IMR-90 (cell line): ENCODE measurements at regions of chr1 and their contacts with region 1.

Region 1: DNA sequence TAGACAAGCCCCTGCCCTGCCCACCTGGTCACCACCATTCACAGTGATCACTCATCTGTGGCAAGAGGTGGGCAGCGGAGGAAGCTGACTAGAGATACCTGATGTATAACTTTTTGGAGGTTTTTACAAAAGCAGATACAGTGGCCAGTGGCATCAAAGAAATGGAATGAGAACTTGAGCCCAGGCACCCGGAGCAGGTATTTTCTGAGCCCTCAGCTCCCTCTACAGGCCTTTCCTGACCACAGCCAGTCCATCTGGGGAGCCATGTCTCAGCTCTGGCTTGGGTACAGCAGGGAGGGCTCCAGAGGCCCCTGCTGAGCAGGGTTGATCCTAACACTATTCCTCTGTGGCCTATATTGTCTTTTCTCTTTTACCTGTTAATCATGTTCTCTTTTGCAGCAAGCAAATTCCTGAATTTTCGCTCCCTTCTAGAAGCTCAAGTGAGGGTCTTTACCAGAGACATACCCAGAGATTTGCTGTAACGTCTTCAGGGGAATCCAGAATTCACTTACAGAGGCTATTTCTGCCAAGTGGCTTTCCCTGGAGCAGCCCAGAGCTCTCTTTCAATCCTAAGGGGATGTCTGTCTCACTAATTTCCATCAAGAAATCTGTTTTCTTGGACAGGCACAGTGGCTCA is 27.3 kb downstream of the GPR157 start:
- DNase-seq: peak; percentile 68
- ATAC-seq: peak; percentile 81
- H3K4me3 ChIP-seq: no peak overlapping the region
- H3K27ac ChIP-seq: no peak overlapping the region
- H3K4me1 ChIP-seq: peaks cover 3% of the 10 kb centered on the region
- H3K27me3 ChIP-seq: no peaks in the 10 kb centered on the region
- CTCF ChIP-seq: peak; percentile 81
- POLR2A ChIP-seq: no peak
- RAD21 ChIP-seq: peak; percentile 82

Region 2: DNA sequence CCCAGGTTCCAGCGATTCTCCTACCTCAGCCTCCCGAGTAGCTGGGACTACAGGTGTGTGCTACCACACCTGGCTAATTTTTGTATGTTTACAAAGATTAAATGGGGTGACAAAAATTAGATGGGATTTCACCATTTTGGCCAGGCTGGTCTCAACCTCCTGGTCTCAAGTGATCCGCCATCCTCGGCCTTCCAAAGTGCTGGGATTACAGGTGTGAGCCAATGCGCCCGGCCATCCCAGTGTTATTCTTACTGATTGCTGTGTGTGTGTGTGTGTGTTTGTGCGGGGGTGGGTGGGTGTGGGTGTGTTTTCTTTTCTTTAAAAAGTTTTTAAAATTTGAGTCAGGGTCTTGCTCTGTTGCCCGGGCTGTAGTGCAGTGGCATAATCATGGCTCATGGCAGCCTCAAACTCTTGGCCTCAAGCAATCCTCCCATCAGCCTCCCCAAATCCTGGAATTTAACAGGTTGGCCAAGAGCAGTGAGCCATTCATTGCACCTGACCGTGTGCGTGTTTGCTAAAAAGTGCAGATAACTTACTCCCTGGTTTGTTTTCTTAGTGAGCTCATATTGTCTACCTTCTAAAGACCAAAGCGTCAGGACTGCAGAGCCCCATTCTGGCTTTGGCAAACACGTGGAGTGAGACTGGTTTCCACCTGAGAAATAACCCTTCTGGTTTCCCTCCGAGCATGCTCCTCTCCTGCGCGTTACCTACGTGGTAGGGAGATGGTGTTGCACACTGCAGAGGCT is 188.3 kb before region 1 on chr1:
- CTCF ChIA-PET with region 1: interaction called, 4 read pairs
- POLR2A ChIA-PET with region 1: no interaction called
- dilution Hi-C with region 1: no loop called
- in situ Hi-C with region 1: loop called (anchors 5 kb)
- intact Hi-C with region 1: loop called (anchors 1 kb)
- DNase-seq: no peak
- ATAC-seq: no peak
- H3K4me3 ChIP-seq: no peak overlapping the region
- H3K27ac ChIP-seq: no peak overlapping the region
- H3K4me1 ChIP-seq: no peaks in the 10 kb centered on the region
- H3K27me3 ChIP-seq: peaks cover 2% of the 10 kb centered on the region; the same call in 1 of the 2 replicates
- CTCF ChIP-seq: no peak
- POLR2A ChIP-seq: no peak
- RAD21 ChIP-seq: no peak

Region 3: DNA sequence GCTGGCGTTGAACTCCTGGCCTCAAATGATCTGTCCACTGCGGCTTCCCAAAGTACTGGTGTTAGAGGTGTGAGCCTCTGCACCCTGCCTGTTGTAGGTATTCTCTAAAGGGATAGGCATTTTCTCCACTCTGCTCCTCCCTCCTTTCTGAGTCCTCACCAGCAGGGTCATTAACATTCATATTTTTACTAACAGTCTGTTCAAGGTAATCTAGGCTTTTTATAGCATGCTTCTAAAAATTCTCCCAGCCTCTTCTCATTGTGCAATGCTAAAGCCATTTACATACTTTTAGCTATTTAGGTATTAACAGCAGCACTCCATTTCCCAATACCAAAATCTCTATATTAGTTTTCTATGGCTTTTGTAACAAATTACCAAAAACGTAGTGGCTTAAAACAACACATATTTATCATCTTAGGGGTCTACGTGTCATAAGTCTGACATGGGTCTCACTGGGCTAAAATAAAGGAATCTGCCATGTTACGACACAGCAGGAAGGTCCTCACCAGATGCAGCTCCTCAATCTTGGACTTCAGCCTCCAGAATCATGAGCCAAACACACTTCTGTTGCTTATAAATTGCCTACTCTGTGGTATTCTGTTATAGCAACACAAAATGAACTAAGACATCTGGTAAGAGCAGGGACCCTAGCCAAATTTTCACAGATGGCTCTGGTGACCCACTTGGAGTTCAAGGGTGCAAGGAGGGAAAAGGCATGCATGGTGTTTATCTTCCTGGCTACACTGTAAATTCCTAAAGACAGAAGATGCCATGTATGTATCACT is 72.5 kb before region 1 on chr1:
- CTCF ChIA-PET with region 1: no interaction called
- POLR2A ChIA-PET with region 1: no interaction called
- dilution Hi-C with region 1: no loop called
- in situ Hi-C with region 1: no loop called
- intact Hi-C with region 1: no loop called
- DNase-seq: peak; percentile 40
- ATAC-seq: peak; percentile 66
- H3K4me3 ChIP-seq: no peak overlapping the region
- H3K27ac ChIP-seq: peak overlapping the region; percentile 65; the same call in 1 of the 2 replicates
- H3K4me1 ChIP-seq: peaks cover 9% of the 10 kb centered on the region; the same call in 1 of the 2 replicates
- H3K27me3 ChIP-seq: peaks cover 10% of the 10 kb centered on the region
- CTCF ChIP-seq: no peak
- POLR2A ChIP-seq: no peak
- RAD21 ChIP-seq: no peak

Region 4: GRCh38 chr1:9121496-9122409 is 20.1 kb after region 1 on chr1:
- CTCF ChIA-PET with region 1: no interaction called
- POLR2A ChIA-PET with region 1: no interaction called
- dilution Hi-C with region 1: no loop called
- in situ Hi-C with region 1: no loop called
- intact Hi-C with region 1: no loop called
- DNase-seq: no peak
- ATAC-seq: no peak
- H3K4me3 ChIP-seq: no peak overlapping the region
- H3K27ac ChIP-seq: no peak overlapping the region
- H3K4me1 ChIP-seq: no peaks in the 10 kb centered on the region
- H3K27me3 ChIP-seq: no peaks in the 10 kb centered on the region
- CTCF ChIP-seq: no peak
- POLR2A ChIP-seq: no peak
- RAD21 ChIP-seq: no peak